ENCODE measurements at regions of chr5 and their contacts with region 1.

Region 1: GRCh38 chr5:54217826-54218503 is 92.4 kb downstream of the ARL15 start:
- DNase-seq: peak; percentile 37
- ATAC-seq: peak; percentile 72
- H3K4me3 ChIP-seq: no peak overlapping the region
- H3K27ac ChIP-seq: no peak overlapping the region
- H3K4me1 ChIP-seq: no peaks in the 10 kb centered on the region
- H3K27me3 ChIP-seq: no peaks in the 10 kb centered on the region; a peak in 1 of 5 replicates
- CTCF ChIP-seq: peak; percentile 76
- EP300 ChIP-seq: no peak
- POLR2A ChIP-seq: no peak
- RAD21 ChIP-seq: 0 out of 2 replicates have a peak, but pooled peaks have one; percentile 43

Region 2: GRCh38 chr5:53170748-53171349 is 1047.1 kb before region 1 on chr5:
- CTCF ChIA-PET with region 1: interaction called, 4 read pairs
- POLR2A ChIA-PET with region 1: no interaction called
- in situ Hi-C with region 1: loop called (anchors 10 kb)
- intact Hi-C with region 1: loop called (anchors 2 kb)
- DNase-seq: peak; percentile 23
- ATAC-seq: peak; percentile 72
- H3K4me3 ChIP-seq: no peak overlapping the region
- H3K27ac ChIP-seq: no peak overlapping the region
- H3K4me1 ChIP-seq: no peaks in the 10 kb centered on the region
- H3K27me3 ChIP-seq: no peaks in the 10 kb centered on the region; a peak in 2 of 5 replicates
- CTCF ChIP-seq: peak; percentile 74
- EP300 ChIP-seq: no peak
- POLR2A ChIP-seq: no peak
- RAD21 ChIP-seq: peak; percentile 38; the same call in 1 of the 2 replicates

Region 3: GRCh38 chr5:53262348-53262970 is 955.5 kb before region 1 on chr5:
- CTCF ChIA-PET with region 1: interaction called, 13 read pairs
- POLR2A ChIA-PET with region 1: no interaction called
- in situ Hi-C with region 1: loop called (anchors 10 kb)
- intact Hi-C with region 1: loop called (anchors 1 kb)
- DNase-seq: peak; percentile 2
- ATAC-seq: peak; percentile 48; the same call in 1 of the 3 replicates
- H3K4me3 ChIP-seq: no peak overlapping the region
- H3K27ac ChIP-seq: no peak overlapping the region
- H3K4me1 ChIP-seq: no peaks in the 10 kb centered on the region
- H3K27me3 ChIP-seq: no peaks in the 10 kb centered on the region
- CTCF ChIP-seq: peak; percentile 67
- EP300 ChIP-seq: no peak
- POLR2A ChIP-seq: no peak
- RAD21 ChIP-seq: no peak

Region 4: GRCh38 chr5:54062958-54063357 is 155.0 kb before region 1 on chr5:
- CTCF ChIA-PET with region 1: no interaction called
- POLR2A ChIA-PET with region 1: no interaction called
- in situ Hi-C with region 1: no loop called
- intact Hi-C with region 1: loop called (anchors 10 kb)
- DNase-seq: no peak
- ATAC-seq: no peak
- H3K4me3 ChIP-seq: no peak overlapping the region
- H3K27ac ChIP-seq: no peak overlapping the region
- H3K4me1 ChIP-seq: no peaks in the 10 kb centered on the region
- H3K27me3 ChIP-seq: no peaks in the 10 kb centered on the region
- CTCF ChIP-seq: no peak
- EP300 ChIP-seq: no peak
- POLR2A ChIP-seq: no peak
- RAD21 ChIP-seq: no peak

Measured in HepG2 (cell line).